Activated CD4-positive, alpha-beta T cell treated with anti-CD3 and anti-CD28 coated beads for 36 hours (primary cell): ENCODE measurements at regions of chr19 and their contacts with region 1.

Region 1: DNA sequence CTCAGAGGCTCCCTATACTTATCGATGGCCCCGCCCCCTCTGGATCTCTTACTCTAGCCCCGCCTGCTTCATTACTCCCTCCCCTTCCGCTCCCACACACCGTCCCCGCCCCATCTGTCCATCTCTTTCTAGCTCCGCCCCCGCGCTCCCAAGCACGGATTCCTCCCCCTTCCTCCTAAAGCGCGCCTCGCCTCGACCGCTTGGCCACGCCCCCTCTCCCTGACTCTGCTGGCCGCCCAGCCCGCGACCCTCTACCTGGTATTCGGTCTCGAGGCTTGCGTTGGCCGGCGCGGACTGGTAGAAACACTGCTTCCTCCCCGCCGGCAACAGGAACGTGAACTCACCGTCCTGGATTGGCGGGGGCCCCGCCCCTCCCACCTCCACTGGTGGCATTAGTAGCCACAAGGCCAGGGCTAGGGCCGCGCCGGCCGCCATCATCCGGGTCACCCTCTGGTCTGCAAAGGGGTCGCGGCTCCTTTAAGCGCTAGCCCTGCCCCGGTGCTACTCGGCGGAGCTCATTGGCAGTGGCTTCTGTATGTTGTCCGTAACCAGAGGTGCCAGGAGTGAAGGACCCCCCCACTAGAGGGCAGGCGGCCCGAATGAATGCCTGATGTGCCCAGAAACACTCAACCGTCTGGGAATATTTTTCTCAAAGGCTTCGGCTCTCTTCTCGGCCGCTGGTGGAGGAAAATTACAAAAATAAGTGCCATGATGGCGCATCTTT is at the start of gene TMED1:
- DNase-seq: peak; percentile 99
- ATAC-seq: peak; percentile 93
- H3K4me3 Mint-ChIP-seq: peak within 1 kb of the TSS; percentile 94
- H3K27ac Mint-ChIP-seq: peak within 1 kb of the TSS; percentile 99
- H3K4me1 Mint-ChIP-seq: peaks cover 15% of the 10 kb centered on the region
- H3K27me3 Mint-ChIP-seq: no peaks in the 10 kb centered on the region
- total RNA-seq, gene TMED1: 8.7 to 15.3 TPM

Region 2: DNA sequence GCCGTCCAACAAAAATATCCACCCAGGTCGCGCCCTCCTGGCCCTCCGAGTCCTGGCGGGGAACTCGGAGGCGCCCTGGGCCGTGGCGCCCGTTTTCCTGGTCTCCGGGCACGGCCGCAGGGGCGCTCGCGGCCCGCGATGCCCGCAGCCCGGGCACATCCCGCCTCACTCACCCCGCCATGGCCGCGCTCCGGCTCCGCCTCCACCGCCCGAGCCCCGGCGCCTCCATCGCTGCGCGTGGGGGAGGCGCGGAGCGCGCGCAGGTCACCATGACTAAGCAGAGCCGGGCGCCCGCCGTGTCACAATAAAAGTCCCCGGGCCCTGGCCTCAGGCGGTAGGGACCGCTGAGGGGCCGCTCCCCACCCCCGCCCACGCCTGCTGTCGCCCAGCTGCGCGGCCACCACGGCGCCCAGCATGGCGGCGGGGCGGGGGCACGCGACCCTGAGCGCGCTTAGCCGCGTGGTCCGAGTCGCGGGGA is 333.4 kb before region 1 on chr19:
- CTCF ChIA-PET with region 1: no interaction called
- POLR2A ChIA-PET with region 1: no interaction called
- intact Hi-C with region 1: loop called in 1 of 2 experiments (anchors 1 kb)
- DNase-seq: peak; percentile 95
- ATAC-seq: peak; percentile 91
- H3K4me3 Mint-ChIP-seq: peak overlapping the region; percentile 91
- H3K27ac Mint-ChIP-seq: peak overlapping the region; percentile 95
- H3K4me1 Mint-ChIP-seq: peaks cover 30% of the 10 kb centered on the region
- H3K27me3 Mint-ChIP-seq: no peaks in the 10 kb centered on the region

Region 3: DNA sequence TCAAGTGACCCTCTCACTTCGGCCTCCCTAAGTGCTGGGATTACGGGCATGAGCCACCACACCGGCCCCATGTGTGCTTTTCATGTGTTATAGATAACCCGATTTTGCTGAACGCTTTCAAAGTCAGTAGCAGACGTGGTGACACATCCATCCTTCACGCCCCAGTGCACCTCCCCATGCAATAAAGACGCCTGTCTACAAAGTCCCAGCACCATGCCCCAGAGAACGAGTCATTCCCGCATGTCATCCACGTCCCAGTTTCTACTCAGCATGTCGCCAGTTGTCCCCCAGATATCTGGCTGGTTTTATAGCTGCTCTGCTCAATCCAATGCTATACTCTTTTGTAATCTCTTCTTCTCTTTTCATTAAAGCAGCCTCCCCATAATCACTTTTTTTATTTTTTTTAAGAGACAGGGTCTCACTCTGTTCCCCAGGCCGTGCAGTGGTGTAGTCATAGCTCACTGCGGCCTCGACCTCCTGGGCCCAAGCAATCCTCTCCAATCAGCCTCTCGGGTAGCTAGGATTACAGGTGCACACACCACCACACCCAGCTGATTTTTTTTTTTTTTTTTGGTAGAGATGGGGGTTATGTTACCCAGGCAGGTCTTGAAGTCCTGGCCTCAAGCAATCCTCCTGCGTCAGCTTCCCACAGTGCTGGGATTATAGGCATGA is 75.5 kb before region 1 on chr19:
- CTCF ChIA-PET with region 1: interaction called, 3 read pairs
- POLR2A ChIA-PET with region 1: no interaction called
- intact Hi-C with region 1: loop called in 1 of 2 experiments (anchors 1 kb)
- DNase-seq: peak; percentile 72
- ATAC-seq: peak; percentile 56
- H3K4me3 Mint-ChIP-seq: peak overlapping the region; percentile 70
- H3K27ac Mint-ChIP-seq: peak overlapping the region; percentile 84
- H3K4me1 Mint-ChIP-seq: peaks cover 83% of the 10 kb centered on the region
- H3K27me3 Mint-ChIP-seq: no peaks in the 10 kb centered on the region

Region 4: GRCh38 chr19:10864538-10864899 is 28.6 kb after region 1 on chr19:
- CTCF ChIA-PET with region 1: interaction called, 59 read pairs
- POLR2A ChIA-PET with region 1: interaction called, 8 read pairs
- intact Hi-C with region 1: no loop called
- DNase-seq: peak; percentile 93
- ATAC-seq: peak; percentile 94
- H3K4me3 Mint-ChIP-seq: no peak overlapping the region
- H3K27ac Mint-ChIP-seq: peak overlapping the region; percentile 16
- H3K4me1 Mint-ChIP-seq: peaks cover 14% of the 10 kb centered on the region
- H3K27me3 Mint-ChIP-seq: no peaks in the 10 kb centered on the region

Region 5: DNA sequence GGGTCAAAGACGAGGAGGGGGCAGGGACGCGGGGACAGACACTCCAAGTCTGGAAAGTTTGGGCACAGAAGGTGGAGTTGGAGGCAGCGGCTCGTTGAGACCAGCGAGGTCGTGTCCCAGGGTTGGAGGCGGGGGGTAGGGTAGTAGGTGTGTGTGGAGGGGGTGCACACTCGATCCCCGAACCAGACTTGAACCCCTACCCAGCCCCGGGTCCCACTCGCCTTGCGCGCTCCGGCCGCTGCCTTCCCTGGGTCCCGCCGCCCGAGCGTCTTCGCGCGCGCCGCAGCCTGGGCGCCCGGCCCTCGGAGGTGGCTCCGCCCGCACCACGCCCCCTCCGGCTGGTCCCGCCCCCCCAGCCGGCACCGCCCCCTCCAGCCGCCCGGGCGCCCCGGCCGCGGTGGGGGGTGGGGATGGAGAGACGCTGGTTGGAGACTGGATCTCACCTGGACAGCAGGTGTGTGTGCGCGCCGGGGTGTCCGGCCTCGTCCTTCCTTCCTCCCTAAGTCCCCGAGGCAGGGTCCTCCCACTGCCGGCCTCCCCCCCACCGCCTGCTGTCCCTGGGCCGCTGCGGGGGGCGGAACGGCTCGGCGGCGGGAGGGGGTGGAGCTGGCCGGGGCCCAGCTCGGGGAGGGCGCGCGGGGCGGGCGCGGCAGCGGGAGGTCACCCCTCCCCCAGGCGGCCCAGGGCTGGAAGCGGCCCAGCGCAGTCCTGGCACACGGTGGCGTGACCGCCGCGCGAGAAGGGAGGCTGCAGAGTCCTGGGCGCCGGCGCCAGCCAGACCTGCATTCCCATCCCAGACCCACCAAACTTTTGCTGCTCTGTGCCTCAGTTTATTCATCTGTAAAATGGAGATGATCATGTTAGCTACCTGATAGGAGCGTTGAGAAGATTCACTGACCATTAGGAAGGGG is 361.6 kb after region 1 on chr19 and contains the start of gene KANK2:
- CTCF ChIA-PET with region 1: no interaction called
- POLR2A ChIA-PET with region 1: interaction called, 3 read pairs
- intact Hi-C with region 1: loop called in 1 of 2 experiments (anchors 2 kb)
- DNase-seq: peak; percentile 88
- ATAC-seq: peak; percentile 92
- H3K4me3 Mint-ChIP-seq: peak within 1 kb of the TSS; percentile 53
- H3K27ac Mint-ChIP-seq: no peak within 1 kb of the TSS
- H3K4me1 Mint-ChIP-seq: peaks cover 7% of the 10 kb centered on the region
- H3K27me3 Mint-ChIP-seq: peaks cover 11% of the 10 kb centered on the region
- total RNA-seq, gene KANK2: 0.91 to 1.2 TPM